Mammary epithelial cell (primary cell): ENCODE measurements at regions of chr15 and their contacts with region 1.

Region 1: GRCh38 chr15:69713726-69714559 is 261.3 kb downstream of the RPLP1 start:
- DNase-seq: peak; percentile 23
- H3K4me3 ChIP-seq: no peak overlapping the region
- H3K27ac ChIP-seq: no peak overlapping the region
- H3K4me1 ChIP-seq: peaks cover 6% of the 10 kb centered on the region
- H3K27me3 ChIP-seq: peaks cover 3% of the 10 kb centered on the region
- CTCF ChIP-seq: no peak

Region 2: DNA sequence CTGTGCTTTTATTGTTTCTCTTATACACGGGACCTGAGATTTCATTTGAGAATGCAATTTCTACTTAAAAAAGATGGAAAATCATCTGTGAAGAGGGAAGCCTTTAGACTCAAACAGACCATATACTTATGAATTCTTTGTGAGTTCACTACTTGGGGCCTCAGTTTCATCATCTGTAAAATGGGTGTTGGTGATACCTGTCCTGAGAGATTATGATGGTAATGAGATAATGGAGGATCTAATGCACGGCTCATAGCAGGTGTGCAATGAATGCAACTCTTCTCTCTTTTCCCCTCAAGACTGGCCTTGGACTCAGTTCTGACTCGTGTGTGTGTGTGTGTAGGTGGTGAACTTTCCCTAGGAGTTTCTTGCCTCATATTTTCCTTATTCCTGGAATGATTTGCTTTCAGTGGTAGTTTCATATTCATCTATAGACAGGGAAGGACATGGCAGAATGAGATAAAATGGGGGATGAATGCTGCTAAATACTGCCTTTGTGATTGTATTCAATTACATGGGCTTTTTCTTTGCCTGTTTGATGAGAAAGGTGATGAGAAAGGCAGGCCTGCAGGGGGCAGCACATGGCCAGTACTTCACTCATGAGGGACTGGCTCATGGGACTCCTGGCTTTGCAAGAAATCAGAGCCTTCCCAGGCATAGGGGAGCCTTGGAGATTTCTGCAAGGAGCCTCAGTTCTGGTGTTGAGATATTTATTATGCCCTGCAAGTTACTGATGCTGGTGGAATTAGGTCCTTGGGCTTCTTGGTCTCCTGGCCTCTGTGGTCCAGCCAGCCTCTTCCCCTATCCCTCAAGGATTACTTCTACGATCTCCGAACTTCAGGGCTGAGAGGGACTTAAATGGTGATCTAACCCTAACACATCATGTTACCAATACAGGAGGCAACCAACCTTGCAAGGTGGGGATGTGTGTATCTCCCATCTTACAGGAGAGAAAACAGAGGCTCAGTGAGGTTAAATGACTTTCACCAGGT is 190.6 kb before region 1 on chr15:
- CTCF ChIA-PET with region 1: no interaction called
- dilution Hi-C with region 1: no loop called
- in situ Hi-C with region 1: loop called in 1 of 2 experiments (anchors 25 kb)
- intact Hi-C with region 1: no loop called
- DNase-seq: peak; percentile 50
- H3K4me3 ChIP-seq: no peak overlapping the region
- H3K27ac ChIP-seq: no peak overlapping the region
- H3K4me1 ChIP-seq: no peaks in the 10 kb centered on the region
- H3K27me3 ChIP-seq: no peaks in the 10 kb centered on the region
- CTCF ChIP-seq: peak; percentile 79 to 80

Region 3: GRCh38 chr15:69604072-69604411 is 109.9 kb before region 1 on chr15:
- CTCF ChIA-PET with region 1: no interaction called
- dilution Hi-C with region 1: loop called (anchors 5 kb)
- in situ Hi-C with region 1: no loop called
- intact Hi-C with region 1: no loop called
- DNase-seq: peak; percentile 21
- H3K4me3 ChIP-seq: no peak overlapping the region
- H3K27ac ChIP-seq: no peak overlapping the region
- H3K4me1 ChIP-seq: no peaks in the 10 kb centered on the region
- H3K27me3 ChIP-seq: peaks cover 14% of the 10 kb centered on the region
- CTCF ChIP-seq: peak; percentile 15 to 50

Region 4: GRCh38 chr15:69755551-69756310 is 41.8 kb after region 1 on chr15:
- CTCF ChIA-PET with region 1: no interaction called
- dilution Hi-C with region 1: loop called (anchors 5 kb)
- in situ Hi-C with region 1: no loop called
- intact Hi-C with region 1: no loop called
- DNase-seq: peak; percentile 12
- H3K4me3 ChIP-seq: no peak overlapping the region
- H3K27ac ChIP-seq: no peak overlapping the region
- H3K4me1 ChIP-seq: peaks cover 18% of the 10 kb centered on the region
- H3K27me3 ChIP-seq: no peaks in the 10 kb centered on the region
- CTCF ChIP-seq: no peak